Heart right ventricle (tissue), 16 donors: ENCODE measurements at regions of chr5 and their contacts with region 1.

Region 1: GRCh38 chr5:1641560-1642166 is 117.9 kb upstream of the LPCAT1 start:
- DNase-seq: peak; percentile 72 to 81
- ATAC-seq: peak in 7 of 8 donors; percentile 43 to 66 (median 60)
- H3K4me3 ChIP-seq: no peak overlapping the region
- H3K27ac ChIP-seq: no peak overlapping the region
- H3K4me1 ChIP-seq: peaks cover 0 to 17% (median 7%) of the 10 kb centered on the region in 9 donors
- H3K27me3 ChIP-seq: peaks cover 7 to 41% (median 24%) of the 10 kb centered on the region in 7 donors
- CTCF ChIP-seq: peak; percentile 51 to 91 (median 73)

Region 2: DNA sequence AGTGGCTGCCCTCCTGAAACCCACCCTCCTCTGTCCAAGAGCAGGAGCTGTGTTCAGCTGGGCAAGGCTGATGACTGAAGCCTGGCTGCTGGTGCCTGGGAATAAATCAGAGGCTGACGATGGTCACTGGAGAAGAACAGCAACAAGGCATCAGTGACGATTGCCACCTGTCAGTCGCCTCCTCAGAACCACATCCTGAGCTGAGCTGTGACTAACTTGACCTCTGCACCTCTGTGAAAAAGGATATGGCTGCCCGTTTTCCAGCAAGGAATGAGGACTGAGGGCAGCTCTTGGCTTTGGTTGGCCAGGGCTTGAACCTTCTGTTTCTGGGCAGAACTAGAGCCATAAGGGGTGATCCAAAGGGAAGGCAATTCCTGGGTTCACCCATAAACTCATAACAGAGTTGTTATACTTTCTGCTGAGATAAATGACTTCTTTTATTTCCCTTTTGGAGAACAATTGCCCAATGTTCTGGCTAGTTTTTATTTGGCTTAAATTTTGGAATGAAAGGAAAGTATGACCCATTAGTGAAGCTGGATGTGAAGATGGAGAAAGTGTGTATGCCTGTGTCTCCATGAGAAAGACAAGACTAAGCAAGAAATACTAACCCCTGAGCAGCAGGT is 708.9 kb before region 1 on chr5:
- intact Hi-C with region 1: loop called in 4 of 10 experiments (anchors 10 kb)
- DNase-seq: no peak
- ATAC-seq: peak in 6 of 8 donors; percentile 30 to 66 (median 54)
- H3K4me3 ChIP-seq: no peak overlapping the region
- H3K27ac ChIP-seq: peak overlapping the region in 9 of 10 donors; percentile 1 to 51 (median 22)
- H3K4me1 ChIP-seq: peaks cover 0 to 7% (median 0%) of the 10 kb centered on the region in 9 donors
- H3K27me3 ChIP-seq: peaks cover 0 to 9% (median 5%) of the 10 kb centered on the region in 7 donors
- CTCF ChIP-seq: no peak

Region 3: GRCh38 chr5:1174122-1174936 is 467.3 kb before region 1 on chr5:
- intact Hi-C with region 1: loop called in 9 of 10 experiments (anchors 2 to 10 kb)
- DNase-seq: peak; percentile 61 to 68
- ATAC-seq: peak; percentile 57 to 83 (median 69)
- H3K4me3 ChIP-seq: no peak overlapping the region
- H3K27ac ChIP-seq: peak overlapping the region in 1 of 10 donors; percentile 31
- H3K4me1 ChIP-seq: peaks cover 0 to 5% (median 0%) of the 10 kb centered on the region in 9 donors
- H3K27me3 ChIP-seq: peaks cover 0 to 5% (median 0%) of the 10 kb centered on the region in 7 donors
- CTCF ChIP-seq: peak; percentile 58 to 85 (median 80)

Region 4: GRCh38 chr5:1385395-1386273 is 256.0 kb before region 1 on chr5:
- intact Hi-C with region 1: loop called in 5 of 10 experiments (anchors 5 to 10 kb)
- DNase-seq: peak; percentile 79 to 86
- ATAC-seq: peak; percentile 92 to 95 (median 92)
- H3K4me3 ChIP-seq: peak overlapping the region; percentile 39 to 76 (median 66)
- H3K27ac ChIP-seq: peak overlapping the region in 8 of 10 donors; percentile 7 to 95 (median 49)
- H3K4me1 ChIP-seq: peaks cover 0 to 20% (median 13%) of the 10 kb centered on the region in 9 donors
- H3K27me3 ChIP-seq: peaks cover 0 to 33% (median 25%) of the 10 kb centered on the region in 7 donors
- CTCF ChIP-seq: no peak

Region 5: GRCh38 chr5:1723957-1724821 is 82.5 kb after region 1 on chr5:
- intact Hi-C with region 1: no loop called
- DNase-seq: no peak
- ATAC-seq: no peak
- H3K4me3 ChIP-seq: no peak overlapping the region
- H3K27ac ChIP-seq: no peak overlapping the region
- H3K4me1 ChIP-seq: no peaks in the 10 kb centered on the region
- H3K27me3 ChIP-seq: peaks cover 0 to 34% (median 18%) of the 10 kb centered on the region in 7 donors
- CTCF ChIP-seq: no peak